Aorta (tissue), 5 donors: ENCODE measurements at regions of chr12 and their contacts with region 1.

Region 1: GRCh38 chr12:111451649-111452129 is 46.0 kb downstream of the SH2B3 start:
- DNase-seq: no peak
- ATAC-seq: peak; percentile 39
- H3K4me3 ChIP-seq: no peak overlapping the region
- H3K27ac ChIP-seq: no peak overlapping the region
- H3K4me1 ChIP-seq: no peaks in the 10 kb centered on the region
- H3K27me3 ChIP-seq: no peaks in the 10 kb centered on the region

Region 2: DNA sequence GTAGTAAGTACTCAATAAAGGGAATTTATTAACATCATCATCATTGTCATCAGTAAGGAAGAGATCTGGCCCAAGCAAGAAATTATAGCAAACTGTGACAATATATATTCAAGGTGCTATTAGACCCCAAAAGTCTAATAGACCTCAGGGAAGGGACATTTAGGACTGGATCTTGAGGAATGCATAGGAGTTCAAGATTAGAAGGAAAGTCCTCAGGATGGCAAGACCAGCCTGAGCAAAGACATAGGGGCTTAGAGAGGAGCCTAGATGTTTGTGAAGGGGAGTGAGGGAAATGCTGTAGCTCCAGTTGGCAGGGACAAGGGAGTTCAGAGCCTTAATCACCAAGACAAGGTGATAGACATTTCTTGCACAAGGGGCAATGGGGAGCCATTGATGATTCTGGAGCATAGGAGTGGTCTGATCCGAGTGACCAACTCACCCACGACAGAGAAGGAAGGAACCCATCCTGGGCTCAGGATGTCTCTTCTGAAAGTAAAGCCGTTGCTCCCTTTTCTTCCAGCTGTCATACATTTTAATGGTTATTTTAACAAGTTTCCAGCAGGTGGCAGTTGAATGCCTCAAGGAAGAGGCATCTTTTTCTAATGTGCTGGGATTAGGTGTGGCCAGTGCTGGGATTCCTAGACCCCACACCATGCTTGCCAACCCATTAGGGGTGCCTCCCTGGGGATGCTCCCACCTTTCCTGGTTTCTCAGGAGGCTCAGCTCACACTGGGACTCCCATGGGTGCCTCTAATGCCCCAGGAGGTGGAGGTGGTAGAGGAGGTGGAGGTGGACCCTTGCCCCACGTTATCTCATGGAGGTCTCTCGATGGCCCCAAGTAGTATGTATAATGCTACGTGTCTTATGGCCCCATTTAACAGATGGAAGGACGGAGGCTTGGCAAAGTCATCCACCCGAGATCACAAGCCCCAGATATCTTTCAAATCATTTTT is 120.6 kb before region 1 on chr12:
- intact Hi-C with region 1: loop called in 1 of 2 experiments (anchors 5 kb)
- DNase-seq: no peak
- ATAC-seq: no peak
- H3K4me3 ChIP-seq: no peak overlapping the region
- H3K27ac ChIP-seq: no peak overlapping the region
- H3K4me1 ChIP-seq: no peaks in the 10 kb centered on the region
- H3K27me3 ChIP-seq: no peaks in the 10 kb centered on the region